Natural killer cell (primary cell): ENCODE measurements at regions of chr9 and their contacts with region 1.

Region 1: DNA sequence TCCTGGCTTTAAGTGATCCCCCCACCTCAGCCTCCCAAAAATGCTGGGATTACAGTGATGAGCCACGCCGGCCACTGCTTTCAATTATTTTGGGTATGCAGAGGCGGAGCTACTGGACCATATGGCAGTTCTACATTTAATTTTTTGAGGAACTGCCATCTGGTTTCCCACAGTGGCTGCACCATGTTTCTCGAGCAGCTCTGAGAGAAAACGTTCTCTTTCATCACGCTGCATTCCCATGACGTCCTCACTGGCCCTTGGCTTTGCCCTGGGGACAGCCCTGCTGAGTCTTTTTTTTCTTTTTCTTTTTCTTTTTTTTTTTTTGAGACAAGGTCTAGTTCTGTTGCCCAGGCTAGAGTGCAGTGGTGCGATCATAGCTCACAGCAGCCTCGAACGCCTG is 35.5 kb upstream of the GRHPR start:
- DNase-seq: no peak
- ATAC-seq: no peak
- H3K4me3 ChIP-seq: no peak overlapping the region
- H3K4me3 Mint-ChIP-seq: no peak overlapping the region
- H3K27ac ChIP-seq: no peak overlapping the region
- H3K27ac Mint-ChIP-seq: no peak overlapping the region
- H3K4me1 ChIP-seq: peaks cover 16% of the 10 kb centered on the region
- H3K4me1 Mint-ChIP-seq: no peaks in the 10 kb centered on the region
- H3K27me3 ChIP-seq: no peaks in the 10 kb centered on the region
- H3K27me3 Mint-ChIP-seq: peaks cover 0 to 2% of the 10 kb centered on the region in 2 donors
- CTCF ChIP-seq: no peak

Region 2: GRCh38 chr9:36873247-36873875 is 513.6 kb before region 1 on chr9:
- intact Hi-C with region 1: loop called (anchors 5 kb)
- DNase-seq: peak; percentile 57 to 85
- ATAC-seq: peak; percentile 70 to 88 (median 76)
- H3K4me3 ChIP-seq: no peak overlapping the region
- H3K4me3 Mint-ChIP-seq: no peak overlapping the region
- H3K27ac ChIP-seq: no peak overlapping the region
- H3K27ac Mint-ChIP-seq: no peak overlapping the region
- H3K4me1 ChIP-seq: no peaks in the 10 kb centered on the region
- H3K4me1 Mint-ChIP-seq: peaks cover 0 to 5% of the 10 kb centered on the region in 2 donors
- H3K27me3 ChIP-seq: no peaks in the 10 kb centered on the region
- H3K27me3 Mint-ChIP-seq: peaks cover 5% of the 10 kb centered on the region in 2 donors
- CTCF ChIP-seq: peak; percentile 92